Activated naive CD4-positive, alpha-beta T cell treated with anti-CD3 and anti-CD28 coated beads for 36 hours (primary cell): ENCODE measurements at regions of chr15 and their contacts with region 1.

Region 1: DNA sequence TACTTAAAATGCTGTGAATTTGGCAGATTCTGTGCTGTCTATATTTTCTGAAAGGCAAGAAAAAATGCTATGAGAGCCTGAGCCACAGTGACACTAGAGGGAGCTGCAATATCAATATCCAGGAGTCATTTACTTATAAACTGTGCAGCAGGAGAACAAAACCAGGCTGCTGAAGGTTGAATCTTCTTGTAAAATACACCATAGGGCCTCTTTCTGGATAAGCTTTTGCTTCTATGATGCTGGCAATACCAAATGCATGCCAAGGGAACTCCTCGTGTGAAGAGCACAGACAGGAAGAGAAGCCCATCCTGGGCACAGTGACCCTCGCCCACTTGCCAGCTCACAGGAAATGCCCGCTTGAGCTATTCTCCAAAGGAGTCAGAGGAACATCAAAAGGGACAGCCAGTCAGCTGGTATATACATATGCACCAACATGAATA is 48.0 kb upstream of the TSPAN3 start:
- DNase-seq: peak; percentile 64
- H3K4me3 Mint-ChIP-seq: no peak overlapping the region
- H3K27ac Mint-ChIP-seq: no peak overlapping the region
- H3K4me1 Mint-ChIP-seq: peaks cover 8% of the 10 kb centered on the region
- H3K27me3 Mint-ChIP-seq: no peaks in the 10 kb centered on the region

Region 2: DNA sequence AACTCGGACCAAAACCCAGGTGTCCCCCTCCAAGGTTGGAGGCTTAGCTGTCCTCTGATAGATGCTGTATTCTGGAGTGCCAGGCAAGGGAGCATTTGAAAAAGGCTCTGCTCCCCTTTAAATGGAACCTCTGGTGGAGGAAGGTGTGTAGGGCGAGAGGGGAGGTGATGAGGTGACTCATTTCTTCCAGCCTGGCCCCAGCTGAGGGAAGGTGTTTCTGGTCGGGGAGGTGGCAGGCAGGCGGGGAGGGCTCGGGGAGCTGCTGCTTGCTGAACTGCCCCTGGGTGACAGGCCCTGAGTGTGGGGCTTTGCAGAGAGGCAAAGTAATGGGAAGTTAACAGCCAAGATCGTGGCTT is 105.1 kb before region 1 on chr15:
- CTCF ChIA-PET with region 1: no interaction called
- intact Hi-C with region 1: no loop called
- DNase-seq: peak; percentile 97
- H3K4me3 Mint-ChIP-seq: peak overlapping the region; percentile 61
- H3K27ac Mint-ChIP-seq: peak overlapping the region; percentile 89
- H3K4me1 Mint-ChIP-seq: peaks cover 92% of the 10 kb centered on the region
- H3K27me3 Mint-ChIP-seq: no peaks in the 10 kb centered on the region

Region 3: DNA sequence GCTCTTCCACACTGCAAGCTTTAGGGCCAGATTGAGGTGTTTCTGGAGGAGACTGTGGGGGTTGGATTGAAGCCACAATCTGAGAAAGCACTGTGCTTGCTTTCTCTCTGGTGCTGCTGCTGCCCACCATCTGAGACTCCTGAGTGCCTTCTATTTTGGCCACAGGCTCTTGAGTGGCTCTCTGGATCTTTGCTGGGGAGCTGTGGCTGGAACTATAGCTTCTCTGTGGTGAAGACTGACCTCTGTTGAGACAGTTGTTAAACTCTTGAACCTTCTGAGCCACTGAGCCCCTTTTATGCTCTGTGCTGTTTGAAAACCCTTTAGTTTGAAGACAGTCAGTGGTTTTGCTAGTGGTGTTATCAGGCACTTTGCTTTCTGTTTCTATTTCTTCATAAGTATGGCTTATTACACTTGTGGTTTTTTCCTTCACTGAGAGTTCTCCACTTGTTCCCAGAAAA is 60.7 kb after region 1 on chr15:
- CTCF ChIA-PET with region 1: interaction called, 12 read pairs
- intact Hi-C with region 1: no loop called
- DNase-seq: peak; percentile 21
- H3K4me3 Mint-ChIP-seq: no peak overlapping the region
- H3K27ac Mint-ChIP-seq: peak overlapping the region; percentile 44
- H3K4me1 Mint-ChIP-seq: peaks cover 38% of the 10 kb centered on the region
- H3K27me3 Mint-ChIP-seq: no peaks in the 10 kb centered on the region

Region 4: DNA sequence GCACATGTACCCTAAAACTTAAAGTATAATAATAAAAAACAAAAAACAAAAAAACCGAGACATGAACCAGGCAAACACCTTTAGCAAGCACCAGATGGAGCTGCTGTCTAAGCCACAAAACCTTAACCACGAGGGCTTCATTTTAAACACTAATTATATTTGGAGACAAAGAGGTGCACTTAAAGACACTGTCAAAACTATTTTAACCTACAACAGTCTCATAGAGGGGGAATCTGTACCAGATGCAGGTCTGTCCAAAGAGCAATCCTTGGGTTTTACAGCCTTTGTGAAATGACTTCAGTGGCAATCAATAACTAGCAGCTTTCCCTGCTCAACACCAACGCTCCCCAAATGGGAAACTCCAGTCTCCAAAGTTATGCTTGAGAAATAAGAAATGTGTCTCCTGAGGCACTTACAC is 67.7 kb after region 1 on chr15:
- CTCF ChIA-PET with region 1: interaction called, 14 read pairs
- intact Hi-C with region 1: loop called (anchors 5 kb)
- DNase-seq: peak; percentile 35
- H3K4me3 Mint-ChIP-seq: no peak overlapping the region
- H3K27ac Mint-ChIP-seq: no peak overlapping the region
- H3K4me1 Mint-ChIP-seq: peaks cover 52% of the 10 kb centered on the region
- H3K27me3 Mint-ChIP-seq: no peaks in the 10 kb centered on the region